ENCODE measurements at regions of chr4 and their contacts with region 1.

Region 1: GRCh38 chr4:140153718-140154571 is at the start of gene MAML3:
- DNase-seq: peak; percentile 85 to 98 (median 92)

Region 2: GRCh38 chr4:139890816-139891215 is 263.1 kb before region 1 on chr4:
- intact Hi-C with region 1: loop called (anchors 10 kb)
- DNase-seq: no peak

Region 3: GRCh38 chr4:140049024-140049848 is 104.7 kb before region 1 on chr4:
- intact Hi-C with region 1: loop called (anchors 5 kb)
- DNase-seq: peak in 8 of 10 donors; percentile 27 to 90 (median 54)

Region 4: DNA sequence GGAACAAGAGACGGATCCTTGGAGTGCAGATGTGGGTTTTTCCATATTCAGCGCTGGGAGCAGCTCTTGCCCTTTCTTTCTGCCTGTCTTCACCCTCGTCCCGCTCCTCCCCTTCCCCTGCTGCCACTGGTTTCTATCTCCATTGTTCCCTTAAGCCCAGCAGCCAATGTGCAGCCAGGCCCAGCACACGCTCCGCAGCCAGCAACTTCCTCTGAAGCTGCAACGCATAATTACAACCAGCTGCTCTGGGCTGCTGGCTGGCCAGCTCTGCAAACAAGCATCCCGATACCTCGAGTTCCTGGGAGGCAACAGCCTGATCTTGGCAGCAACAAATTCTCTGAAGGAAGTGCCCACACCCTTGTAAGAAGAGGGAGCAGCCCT is 83.7 kb after region 1 on chr4:
- intact Hi-C with region 1: loop called (anchors 5 kb)
- DNase-seq: peak; percentile 59 to 95 (median 70)

Region 5: GRCh38 chr4:140326395-140326993 is 172.5 kb after region 1 on chr4:
- intact Hi-C with region 1: loop called (anchors 5 kb)
- DNase-seq: peak in 5 of 10 donors; percentile 14 to 87 (median 50)

Region 6: GRCh38 chr4:140343303-140343702 is 189.4 kb after region 1 on chr4:
- intact Hi-C with region 1: no loop called
- DNase-seq: no peak

Region 7: GRCh38 chr4:140533951-140534480 is 380.1 kb after region 1 on chr4:
- intact Hi-C with region 1: no loop called
- DNase-seq: no peak

Measured in posterior cingulate gyrus (tissue), 11 donors.